ENCODE measurements at regions of chr5 and their contacts with region 1.

Region 1: GRCh38 chr5:66742083-66742895 is 146.1 kb downstream of the MAST4 start:
- DNase-seq: no peak
- H3K4me3 ChIP-seq: no peak overlapping the region
- H3K27ac ChIP-seq: no peak overlapping the region
- H3K4me1 ChIP-seq: no peaks in the 10 kb centered on the region
- H3K27me3 ChIP-seq: no peaks in the 10 kb centered on the region
- CTCF ChIP-seq: peak; percentile 16 to 30

Region 2: DNA sequence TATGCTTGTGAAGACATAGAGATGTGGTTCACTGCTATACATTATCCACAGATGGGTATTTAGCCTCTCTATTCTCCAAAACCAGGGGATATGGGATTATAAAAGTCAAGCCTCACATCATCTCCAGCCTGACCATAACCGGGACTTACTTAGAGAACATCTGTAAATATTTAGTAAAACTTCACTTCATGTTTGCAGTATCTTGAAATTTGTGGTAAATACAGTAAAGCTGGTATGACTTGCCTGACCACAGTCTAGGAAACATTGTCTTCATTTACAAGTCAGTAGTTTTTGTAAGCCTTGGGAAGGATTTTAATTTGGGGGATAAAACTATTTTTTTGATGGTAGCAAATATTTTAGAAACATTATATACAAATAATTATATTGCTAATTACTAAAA is 81.9 kb before region 1 on chr5:
- CTCF ChIA-PET with region 1: interaction called, 18 read pairs
- dilution Hi-C with region 1: no loop called
- in situ Hi-C with region 1: no loop called
- intact Hi-C with region 1: no loop called
- DNase-seq: no peak
- H3K4me3 ChIP-seq: no peak overlapping the region
- H3K27ac ChIP-seq: no peak overlapping the region
- H3K4me1 ChIP-seq: no peaks in the 10 kb centered on the region
- H3K27me3 ChIP-seq: no peaks in the 10 kb centered on the region
- CTCF ChIP-seq: no peak